ENCODE measurements at regions of chr2 and their contacts with region 1.

Region 1: GRCh38 chr2:202643012-202643858 is 8.5 kb downstream of the FAM117B start:
- DNase-seq: peak in 7 of 9 donors; percentile 63 to 85 (median 79)
- ATAC-seq: peak; percentile 76
- H3K4me3 ChIP-seq: peak overlapping the region; percentile 44
- H3K4me3 Mint-ChIP-seq: peak overlapping the region in 6 of 10 donors; percentile 74 to 86 (median 79)
- H3K27ac ChIP-seq: peak overlapping the region; percentile 65
- H3K27ac Mint-ChIP-seq: peak overlapping the region in 5 of 9 donors; percentile 84 to 91 (median 86)
- H3K4me1 ChIP-seq: peaks cover 19 to 55% of the 10 kb centered on the region in 2 donors
- H3K4me1 Mint-ChIP-seq: peaks cover 31 to 72% (median 58%) of the 10 kb centered on the region in 7 donors
- H3K27me3 ChIP-seq: no peaks in the 10 kb centered on the region
- H3K27me3 Mint-ChIP-seq: no peaks in the 10 kb centered on the region

Region 2: GRCh38 chr2:202660796-202661195 is 17.6 kb after region 1 on chr2:
- CTCF ChIA-PET with region 1: interaction called, 3 read pairs
- POLR2A ChIA-PET with region 1: interaction called, 108 read pairs
- intact Hi-C with region 1: loop called (anchors 1 to 2 kb)
- DNase-seq: no peak
- ATAC-seq: no peak
- H3K4me3 ChIP-seq: no peak overlapping the region
- H3K4me3 Mint-ChIP-seq: peak overlapping the region in 6 of 10 donors; percentile 35 to 89 (median 56)
- H3K27ac ChIP-seq: no peak overlapping the region
- H3K27ac Mint-ChIP-seq: peak overlapping the region in 6 of 9 donors; percentile 30 to 87 (median 78)
- H3K4me1 ChIP-seq: peaks cover 0 to 56% of the 10 kb centered on the region in 2 donors
- H3K4me1 Mint-ChIP-seq: peaks cover 42 to 98% (median 87%) of the 10 kb centered on the region in 7 donors
- H3K27me3 ChIP-seq: no peaks in the 10 kb centered on the region
- H3K27me3 Mint-ChIP-seq: no peaks in the 10 kb centered on the region

Region 3: GRCh38 chr2:202690321-202690900 is 47.2 kb after region 1 on chr2:
- CTCF ChIA-PET with region 1: no interaction called
- POLR2A ChIA-PET with region 1: no interaction called
- intact Hi-C with region 1: loop called in 1 of 2 experiments (anchors 2 kb)
- DNase-seq: no peak
- ATAC-seq: no peak
- H3K4me3 ChIP-seq: no peak overlapping the region
- H3K4me3 Mint-ChIP-seq: peak overlapping the region in 9 of 10 donors; percentile 18 to 65 (median 47)
- H3K27ac ChIP-seq: no peak overlapping the region
- H3K27ac Mint-ChIP-seq: peak overlapping the region in 8 of 9 donors; percentile 38 to 89 (median 64)
- H3K4me1 ChIP-seq: peaks cover 0 to 10% of the 10 kb centered on the region in 2 donors
- H3K4me1 Mint-ChIP-seq: peaks cover 13 to 94% (median 88%) of the 10 kb centered on the region in 7 donors
- H3K27me3 ChIP-seq: no peaks in the 10 kb centered on the region
- H3K27me3 Mint-ChIP-seq: no peaks in the 10 kb centered on the region

Region 4: DNA sequence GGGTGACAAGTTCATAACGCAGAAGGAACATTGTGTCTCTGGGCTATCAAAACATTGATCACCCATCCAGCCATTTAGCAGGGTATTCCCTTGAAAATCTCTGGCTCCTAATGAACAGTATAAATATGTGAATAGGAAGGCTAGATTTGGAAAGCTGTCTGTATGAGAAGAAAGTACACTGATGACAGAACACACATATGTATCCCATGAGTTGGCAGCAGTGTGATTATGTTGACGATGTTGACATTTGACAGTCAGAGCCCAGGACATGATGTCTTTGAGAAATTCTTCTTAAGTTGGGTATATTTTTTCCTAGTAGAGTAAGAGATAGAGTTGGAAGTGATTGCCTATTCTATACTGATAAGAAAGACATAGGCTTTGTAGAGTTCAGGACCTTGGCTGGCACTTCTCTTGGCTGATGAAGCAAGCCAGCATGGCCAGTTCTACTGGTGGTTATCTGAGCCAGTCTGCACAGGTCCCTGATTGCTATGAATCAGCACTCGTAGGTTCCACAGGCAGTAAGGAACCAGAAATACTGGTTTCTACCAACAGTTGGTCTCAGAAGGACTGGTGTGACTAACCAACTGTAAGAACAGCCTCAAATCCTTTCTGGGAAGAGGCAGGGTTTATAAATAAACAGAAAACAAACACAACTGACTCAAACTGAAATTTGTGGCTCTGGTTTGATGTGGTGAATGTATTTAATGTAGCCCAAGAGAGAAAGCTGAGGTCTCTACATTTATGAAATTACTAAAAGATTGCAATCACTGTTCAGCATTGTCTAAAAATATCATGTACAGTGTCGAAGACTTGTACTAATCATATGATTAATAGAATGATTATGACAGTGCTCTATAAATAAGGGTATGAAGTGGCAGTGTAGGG is 935.8 kb after region 1 on chr2:
- CTCF ChIA-PET with region 1: no interaction called
- POLR2A ChIA-PET with region 1: no interaction called
- intact Hi-C with region 1: no loop called
- DNase-seq: peak in 1 of 9 donors; percentile 47
- ATAC-seq: no peak
- H3K4me3 ChIP-seq: no peak overlapping the region
- H3K4me3 Mint-ChIP-seq: peak overlapping the region in 1 of 10 donors; percentile 63
- H3K27ac ChIP-seq: no peak overlapping the region
- H3K27ac Mint-ChIP-seq: peak overlapping the region in 2 of 9 donors; percentile 8 to 47
- H3K4me1 ChIP-seq: peaks cover 0 to 2% of the 10 kb centered on the region in 2 donors
- H3K4me1 Mint-ChIP-seq: peaks cover 0 to 44% (median 0%) of the 10 kb centered on the region in 7 donors
- H3K27me3 ChIP-seq: no peaks in the 10 kb centered on the region
- H3K27me3 Mint-ChIP-seq: peaks cover 0 to 64% (median 0%) of the 10 kb centered on the region in 5 donors